ENCODE measurements at regions of chr3 and their contacts with region 1.

Region 1: DNA sequence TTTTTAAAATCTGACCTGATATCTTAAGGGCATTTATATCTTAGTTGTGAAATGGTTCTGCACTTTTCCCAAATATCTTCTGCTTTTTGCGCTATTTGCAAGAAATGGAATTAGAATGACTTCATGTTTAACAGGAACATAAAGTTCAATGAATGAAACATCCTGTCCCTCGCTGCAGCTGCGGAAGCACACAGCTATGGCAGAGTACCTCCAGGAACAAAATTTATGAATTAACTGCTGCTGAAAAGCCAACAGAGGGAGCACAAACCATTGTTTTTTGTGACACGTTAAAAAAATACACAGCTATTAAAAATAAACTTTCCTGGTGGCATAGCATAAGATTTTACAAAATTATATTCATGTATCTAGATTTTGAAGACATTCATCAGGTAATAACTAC is 404.4 kb upstream of the MDFIC2 start:
- DNase-seq: peak in 4 of 9 donors; percentile 10 to 36 (median 28)
- ATAC-seq: no peak
- H3K4me3 ChIP-seq: no peak overlapping the region
- H3K4me3 Mint-ChIP-seq: no peak overlapping the region
- H3K27ac ChIP-seq: no peak overlapping the region
- H3K27ac Mint-ChIP-seq: no peak overlapping the region
- H3K4me1 ChIP-seq: no peaks in the 10 kb centered on the region
- H3K4me1 Mint-ChIP-seq: peaks cover 0 to 4% (median 3%) of the 10 kb centered on the region in 7 donors
- H3K27me3 ChIP-seq: no peaks in the 10 kb centered on the region
- H3K27me3 Mint-ChIP-seq: peaks cover 10 to 16% (median 13%) of the 10 kb centered on the region in 5 donors

Region 2: GRCh38 chr3:70333080-70333479 is 383.8 kb before region 1 on chr3:
- CTCF ChIA-PET with region 1: no interaction called
- POLR2A ChIA-PET with region 1: no interaction called
- intact Hi-C with region 1: no loop called
- DNase-seq: no peak
- ATAC-seq: no peak
- H3K4me3 ChIP-seq: no peak overlapping the region
- H3K4me3 Mint-ChIP-seq: no peak overlapping the region
- H3K27ac ChIP-seq: no peak overlapping the region
- H3K27ac Mint-ChIP-seq: no peak overlapping the region
- H3K4me1 ChIP-seq: no peaks in the 10 kb centered on the region
- H3K4me1 Mint-ChIP-seq: peaks cover 0 to 2% (median 0%) of the 10 kb centered on the region in 7 donors
- H3K27me3 ChIP-seq: no peaks in the 10 kb centered on the region
- H3K27me3 Mint-ChIP-seq: peaks cover 4 to 40% (median 19%) of the 10 kb centered on the region in 5 donors

Region 3: DNA sequence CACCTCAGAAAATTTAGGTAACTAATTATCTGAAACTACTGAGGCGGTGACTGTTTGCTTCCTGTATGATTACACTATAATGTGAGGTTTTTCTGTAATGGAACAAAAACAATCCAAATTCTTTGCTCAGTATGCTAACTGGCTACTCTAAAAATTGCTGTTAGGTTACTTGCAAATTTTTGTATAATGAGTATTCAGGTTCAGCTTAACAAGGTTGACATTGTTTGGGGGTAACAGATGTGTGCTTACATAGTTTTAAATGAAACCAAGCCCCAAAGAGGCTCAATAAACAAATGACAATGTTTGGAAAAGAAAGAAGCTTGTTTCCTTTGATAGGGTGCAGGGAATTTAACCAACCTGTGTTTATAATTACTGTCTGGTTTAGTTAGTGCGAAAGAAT is 10.1 kb after region 1 on chr3:
- CTCF ChIA-PET with region 1: no interaction called
- POLR2A ChIA-PET with region 1: no interaction called
- intact Hi-C with region 1: no loop called
- DNase-seq: no peak
- ATAC-seq: no peak
- H3K4me3 ChIP-seq: no peak overlapping the region
- H3K4me3 Mint-ChIP-seq: no peak overlapping the region
- H3K27ac ChIP-seq: no peak overlapping the region
- H3K27ac Mint-ChIP-seq: no peak overlapping the region
- H3K4me1 ChIP-seq: no peaks in the 10 kb centered on the region
- H3K4me1 Mint-ChIP-seq: no peaks in the 10 kb centered on the region
- H3K27me3 ChIP-seq: peaks cover 0 to 4% of the 10 kb centered on the region in 2 donors
- H3K27me3 Mint-ChIP-seq: peaks cover 0 to 8% (median 3%) of the 10 kb centered on the region in 5 donors

Region 4: GRCh38 chr3:71069797-71070196 is 353.0 kb after region 1 on chr3:
- CTCF ChIA-PET with region 1: no interaction called
- POLR2A ChIA-PET with region 1: no interaction called
- intact Hi-C with region 1: loop called in 1 of 2 experiments (anchors 5 kb)
- DNase-seq: peak; percentile 26 to 72 (median 68)
- ATAC-seq: peak; percentile 60
- H3K4me3 ChIP-seq: no peak overlapping the region
- H3K4me3 Mint-ChIP-seq: peak overlapping the region in 7 of 10 donors; percentile 1 to 52 (median 37)
- H3K27ac ChIP-seq: peak overlapping the region; percentile 34
- H3K27ac Mint-ChIP-seq: peak overlapping the region in 8 of 9 donors; percentile 76 to 91 (median 84)
- H3K4me1 ChIP-seq: peaks cover 44 to 81% of the 10 kb centered on the region in 2 donors
- H3K4me1 Mint-ChIP-seq: peaks cover 55 to 90% (median 86%) of the 10 kb centered on the region in 7 donors
- H3K27me3 ChIP-seq: no peaks in the 10 kb centered on the region
- H3K27me3 Mint-ChIP-seq: no peaks in the 10 kb centered on the region